H1 (cell line): ENCODE measurements at regions of chr11 and their contacts with region 1.

Region 1: GRCh38 chr11:130318031-130318673 is 3.4 kb upstream of the ZBTB44 start:
- DNase-seq: no peak
- H3K4me3 ChIP-seq: no peak overlapping the region
- H3K27ac ChIP-seq: no peak overlapping the region
- H3K4me1 ChIP-seq: peaks cover 3 to 18% (median 10%) of the 10 kb centered on the region in 4 experiments
- H3K27me3 ChIP-seq: no peaks in the 10 kb centered on the region
- CTCF ChIP-seq: no peak
- EP300 ChIP-seq: no peak
- POLR2A ChIP-seq: no peak
- RAD21 ChIP-seq: no peak

Region 2: DNA sequence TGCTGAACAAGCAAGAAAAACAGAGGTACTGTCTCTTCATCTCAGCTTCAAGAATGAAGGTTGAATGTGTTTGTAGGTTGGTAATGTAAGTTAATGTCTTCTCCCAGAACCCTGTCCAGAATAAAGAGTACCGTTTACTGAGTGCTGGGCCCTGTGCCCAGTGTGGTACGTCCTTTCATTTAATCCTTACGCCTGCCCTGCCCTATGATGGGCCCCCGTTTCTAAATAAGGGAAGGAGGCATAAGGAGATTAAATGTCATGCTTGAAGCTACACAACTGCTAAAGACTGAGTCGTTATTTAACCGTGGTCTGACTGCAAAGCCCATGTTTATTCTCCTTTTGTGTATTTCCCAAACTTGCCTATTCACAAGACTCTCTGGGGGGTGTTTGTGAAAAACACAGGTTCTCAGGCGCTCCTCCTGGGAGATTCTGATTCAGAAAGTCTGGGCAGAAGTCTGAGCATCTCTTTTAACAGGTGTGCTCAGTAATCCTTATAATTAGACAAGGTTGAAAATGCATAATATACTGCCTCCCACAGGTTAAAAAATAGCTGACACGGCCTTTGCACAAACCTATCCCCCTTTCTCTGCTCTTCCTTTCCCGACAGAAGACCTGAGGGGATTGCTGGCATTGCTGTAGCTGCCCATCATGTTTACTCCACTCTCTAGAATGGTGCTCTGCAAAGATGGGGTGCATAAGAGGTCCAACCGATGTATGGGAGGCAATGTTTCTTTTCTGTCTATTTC is 52.9 kb after region 1 on chr11:
- CTCF ChIA-PET with region 1: interaction called, 10 read pairs
- POLR2A ChIA-PET with region 1: interaction called, 3 read pairs
- DNase-seq: no peak
- H3K4me3 ChIP-seq: no peak overlapping the region
- H3K27ac ChIP-seq: no peak overlapping the region
- H3K4me1 ChIP-seq: peaks cover 0 to 15% (median 2%) of the 10 kb centered on the region in 4 experiments; a peak in 3 of 7 replicates
- H3K27me3 ChIP-seq: no peaks in the 10 kb centered on the region
- CTCF ChIP-seq: peak in 1 of 3 experiments; percentile 25; a peak in 1 of 4 replicates
- EP300 ChIP-seq: no peak
- POLR2A ChIP-seq: no peak
- RAD21 ChIP-seq: peak in 1 of 2 experiments; percentile 24; a peak in 1 of 4 replicates